ENCODE measurements at regions of chr2 and their contacts with region 1.

Region 1: GRCh38 chr2:221455214-221455613 is 116.9 kb downstream of the EPHA4 start:
- DNase-seq: no peak
- ATAC-seq: no peak
- H3K4me3 ChIP-seq: no peak overlapping the region
- H3K4me3 Mint-ChIP-seq: no peak overlapping the region
- H3K27ac ChIP-seq: no peak overlapping the region
- H3K27ac Mint-ChIP-seq: no peak overlapping the region
- H3K4me1 ChIP-seq: no peaks in the 10 kb centered on the region
- H3K4me1 Mint-ChIP-seq: peaks cover 0 to 6% (median 0%) of the 10 kb centered on the region in 7 donors
- H3K27me3 ChIP-seq: no peaks in the 10 kb centered on the region
- H3K27me3 Mint-ChIP-seq: peaks cover 0 to 19% (median 0%) of the 10 kb centered on the region in 5 donors

Region 2: GRCh38 chr2:221502270-221503010 is 47.2 kb after region 1 on chr2:
- CTCF ChIA-PET with region 1: no interaction called
- POLR2A ChIA-PET with region 1: no interaction called
- intact Hi-C with region 1: loop called in 1 of 2 experiments (anchors 5 kb)
- DNase-seq: no peak
- ATAC-seq: peak; percentile 18
- H3K4me3 ChIP-seq: no peak overlapping the region
- H3K4me3 Mint-ChIP-seq: no peak overlapping the region
- H3K27ac ChIP-seq: no peak overlapping the region
- H3K27ac Mint-ChIP-seq: peak overlapping the region in 2 of 9 donors; percentile 19 to 22
- H3K4me1 ChIP-seq: no peaks in the 10 kb centered on the region
- H3K4me1 Mint-ChIP-seq: peaks cover 0 to 22% (median 15%) of the 10 kb centered on the region in 7 donors
- H3K27me3 ChIP-seq: no peaks in the 10 kb centered on the region
- H3K27me3 Mint-ChIP-seq: peaks cover 0 to 5% (median 0%) of the 10 kb centered on the region in 5 donors